ENCODE measurements at regions of chr16 and their contacts with region 1.

Region 1: DNA sequence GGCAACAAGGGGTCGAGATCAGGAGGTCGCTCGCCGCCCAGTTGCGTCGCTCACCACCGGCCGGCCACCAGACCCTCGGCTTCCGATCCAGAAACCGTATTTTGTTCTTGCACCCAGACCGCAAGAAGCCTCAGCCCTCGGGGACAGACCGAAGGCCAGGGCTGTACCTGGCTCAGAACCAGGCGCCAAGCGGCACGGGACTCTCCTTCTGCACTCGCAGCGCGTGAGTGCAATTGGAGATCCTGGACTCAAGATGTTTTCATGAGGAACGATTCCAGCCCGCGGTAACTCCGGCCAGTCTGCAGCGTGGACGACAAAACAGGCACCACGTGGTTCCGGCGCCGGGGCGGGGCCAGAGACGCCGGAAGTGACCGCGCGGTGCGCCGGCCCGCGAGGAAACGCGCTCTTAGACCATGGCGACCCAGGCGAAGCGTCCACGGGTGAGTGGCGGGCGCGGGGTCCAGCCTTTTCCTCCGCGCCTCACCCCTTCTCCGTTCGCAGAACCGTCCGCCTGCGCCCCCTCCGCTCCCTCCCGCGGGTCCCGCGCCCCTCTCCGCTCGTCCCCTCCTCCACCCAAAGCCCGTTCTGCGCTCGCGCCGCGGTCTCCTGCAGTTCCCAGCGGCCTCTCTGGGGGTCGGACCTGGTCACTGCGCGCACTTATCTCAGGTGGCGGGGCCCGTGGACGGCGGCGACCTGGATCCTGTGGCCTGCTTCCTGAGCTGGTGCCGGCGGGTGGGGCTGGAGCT is at the start of gene SETD6:
- DNase-seq: peak in 30 of 35 experiments; percentile 26 to 73 (median 50)
- ATAC-seq: peak; percentile 71 to 81 (median 78)
- H3K4me3 ChIP-seq: peak within 1 kb of the TSS; percentile 83 to 87
- H3K4me3 Mint-ChIP-seq: peak within 1 kb of the TSS; percentile 87 to 92 (median 89)
- H3K27ac ChIP-seq: peak within 1 kb of the TSS; percentile 53
- H3K27ac Mint-ChIP-seq: peak within 1 kb of the TSS; percentile 89 to 91
- H3K4me1 ChIP-seq: peaks cover 4 to 22% of the 10 kb centered on the region in 2 experiments
- H3K4me1 Mint-ChIP-seq: peaks cover 19 to 34% (median 29%) of the 10 kb centered on the region in 3 donors
- H3K27me3 ChIP-seq: peaks cover 0 to 2% of the 10 kb centered on the region in 2 experiments
- H3K27me3 Mint-ChIP-seq: no peaks in the 10 kb centered on the region
- total RNA-seq, gene SETD6: 29.6 to 44.2 (median 35.1) TPM

Region 2: GRCh38 chr16:58652461-58653140 is 137.3 kb after region 1 on chr16:
- CTCF ChIA-PET with region 1: no interaction called
- POLR2A ChIA-PET with region 1: no interaction called
- DNase-seq: no peak
- ATAC-seq: no peak
- H3K4me3 ChIP-seq: no peak overlapping the region
- H3K4me3 Mint-ChIP-seq: no peak overlapping the region
- H3K27ac ChIP-seq: no peak overlapping the region
- H3K27ac Mint-ChIP-seq: no peak overlapping the region
- H3K4me1 ChIP-seq: no peaks in the 10 kb centered on the region
- H3K4me1 Mint-ChIP-seq: no peaks in the 10 kb centered on the region
- H3K27me3 ChIP-seq: peaks cover 0 to 8% of the 10 kb centered on the region in 2 experiments
- H3K27me3 Mint-ChIP-seq: peaks cover 0 to 7% of the 10 kb centered on the region in 2 donors

Region 3: GRCh38 chr16:58670177-58670576 is 154.9 kb after region 1 on chr16:
- CTCF ChIA-PET with region 1: interaction called in 1 of 2 experiments, 10 read pairs
- POLR2A ChIA-PET with region 1: no interaction called
- DNase-seq: no peak
- ATAC-seq: no peak
- H3K4me3 ChIP-seq: no peak overlapping the region
- H3K4me3 Mint-ChIP-seq: no peak overlapping the region
- H3K27ac ChIP-seq: no peak overlapping the region
- H3K27ac Mint-ChIP-seq: no peak overlapping the region
- H3K4me1 ChIP-seq: no peaks in the 10 kb centered on the region
- H3K4me1 Mint-ChIP-seq: no peaks in the 10 kb centered on the region
- H3K27me3 ChIP-seq: no peaks in the 10 kb centered on the region
- H3K27me3 Mint-ChIP-seq: no peaks in the 10 kb centered on the region